ENCODE measurements at regions of chr1 and their contacts with region 1.

Region 1: GRCh38 chr1:203273206-203273868 is 32.0 kb upstream of the BTG2 start:
- DNase-seq: peak; percentile 92 to 95 (median 94)
- H3K4me3 ChIP-seq: peak overlapping the region in 2 of 3 donors; percentile 40 to 53
- H3K27ac ChIP-seq: peak overlapping the region; percentile 0 to 33
- H3K4me1 ChIP-seq: peaks cover 5 to 20% (median 6%) of the 10 kb centered on the region in 3 donors
- H3K27me3 ChIP-seq: no peaks in the 10 kb centered on the region
- CTCF ChIP-seq: peak; percentile 99

Region 2: GRCh38 chr1:203219934-203220333 is 53.4 kb before region 1 on chr1:
- intact Hi-C with region 1: no loop called
- DNase-seq: no peak
- H3K4me3 ChIP-seq: no peak overlapping the region
- H3K27ac ChIP-seq: no peak overlapping the region
- H3K4me1 ChIP-seq: no peaks in the 10 kb centered on the region
- H3K27me3 ChIP-seq: no peaks in the 10 kb centered on the region
- CTCF ChIP-seq: no peak

Region 3: DNA sequence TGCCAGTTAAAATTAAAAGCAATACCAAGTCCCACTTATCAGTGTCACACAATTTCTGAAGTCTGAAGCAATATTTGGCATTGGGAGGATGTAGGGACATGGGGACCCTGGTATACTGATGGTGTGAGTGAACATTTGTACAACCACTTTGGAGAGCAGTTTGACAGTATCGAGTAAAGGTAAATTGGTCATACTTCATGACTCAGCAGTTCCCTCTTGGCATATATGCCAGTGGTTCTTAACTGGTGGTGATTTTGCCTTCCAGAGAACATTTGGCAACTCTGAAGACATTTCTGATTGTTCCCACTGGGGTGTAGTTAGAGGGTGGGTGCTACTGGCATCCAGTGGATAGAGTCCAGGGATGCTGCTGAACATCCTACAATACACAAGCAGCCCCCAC is 57.9 kb after region 1 on chr1:
- intact Hi-C with region 1: loop called (anchors 5 kb)
- DNase-seq: no peak
- H3K4me3 ChIP-seq: no peak overlapping the region
- H3K27ac ChIP-seq: no peak overlapping the region
- H3K4me1 ChIP-seq: peaks cover 0 to 10% (median 10%) of the 10 kb centered on the region in 3 donors
- H3K27me3 ChIP-seq: no peaks in the 10 kb centered on the region
- CTCF ChIP-seq: no peak

Region 4: DNA sequence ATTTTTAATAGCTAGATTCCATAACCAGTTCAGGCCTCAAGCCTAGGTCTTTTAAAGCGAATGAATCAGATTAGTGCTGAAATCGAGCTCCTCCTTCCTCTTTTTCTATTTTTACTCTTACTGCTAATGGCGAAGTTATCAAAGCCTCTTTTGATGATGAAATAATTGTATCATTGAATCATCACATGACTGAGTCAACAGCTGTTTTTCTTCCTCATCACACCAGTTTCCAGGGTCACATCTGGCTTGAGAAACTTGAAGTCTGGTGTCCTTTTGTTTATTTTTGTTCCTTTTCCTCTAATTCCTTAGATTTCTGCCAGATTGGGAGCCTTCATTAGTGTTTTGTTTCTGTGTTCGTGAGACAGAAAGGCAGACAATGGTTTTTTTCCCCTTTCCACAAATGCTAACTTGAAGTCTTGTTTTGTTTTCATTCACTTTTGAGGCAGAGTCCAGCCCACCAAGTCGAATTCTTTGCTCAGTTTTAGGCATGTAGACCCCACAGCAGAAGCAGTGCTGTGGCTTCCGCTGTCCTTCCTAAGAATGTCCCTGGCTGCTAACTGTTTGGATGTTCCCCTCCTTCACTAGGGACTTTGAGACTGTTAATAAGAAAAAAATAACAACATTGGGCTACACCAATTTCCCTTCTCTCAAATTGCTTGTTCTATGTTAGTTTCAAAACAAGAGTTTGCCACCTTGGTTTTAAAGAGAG is 129.4 kb after region 1 on chr1:
- intact Hi-C with region 1: no loop called
- DNase-seq: peak in 3 of 5 donors; percentile 22 to 89 (median 65)
- H3K4me3 ChIP-seq: no peak overlapping the region
- H3K27ac ChIP-seq: peak overlapping the region; percentile 52 to 62
- H3K4me1 ChIP-seq: peaks cover 0 to 4% (median 0%) of the 10 kb centered on the region in 3 donors
- H3K27me3 ChIP-seq: no peaks in the 10 kb centered on the region
- CTCF ChIP-seq: no peak

Region 5: GRCh38 chr1:203492082-203492747 is 218.9 kb after region 1 on chr1:
- intact Hi-C with region 1: loop called (anchors 10 kb)
- DNase-seq: peak in 1 of 5 donors; percentile 50
- H3K4me3 ChIP-seq: no peak overlapping the region
- H3K27ac ChIP-seq: no peak overlapping the region
- H3K4me1 ChIP-seq: peaks cover 0 to 6% (median 0%) of the 10 kb centered on the region in 3 donors
- H3K27me3 ChIP-seq: no peaks in the 10 kb centered on the region
- CTCF ChIP-seq: no peak

Measured in kidney (tissue), 22 donors.